Activated T-helper 2 cell treated with anti-CD3 and anti-CD28 coated beads, Interferon-gamma antibody, Interleukin-2, Interleukin-4, amounts not matched to agents 10 μg/mL and 5 μg/mL and 100 μg/mL, durations not matched to agents 14 hours and 24 hours and 36 hours (primary cell): ENCODE measurements at regions of chr11 and their contacts with region 1.

Region 1: DNA sequence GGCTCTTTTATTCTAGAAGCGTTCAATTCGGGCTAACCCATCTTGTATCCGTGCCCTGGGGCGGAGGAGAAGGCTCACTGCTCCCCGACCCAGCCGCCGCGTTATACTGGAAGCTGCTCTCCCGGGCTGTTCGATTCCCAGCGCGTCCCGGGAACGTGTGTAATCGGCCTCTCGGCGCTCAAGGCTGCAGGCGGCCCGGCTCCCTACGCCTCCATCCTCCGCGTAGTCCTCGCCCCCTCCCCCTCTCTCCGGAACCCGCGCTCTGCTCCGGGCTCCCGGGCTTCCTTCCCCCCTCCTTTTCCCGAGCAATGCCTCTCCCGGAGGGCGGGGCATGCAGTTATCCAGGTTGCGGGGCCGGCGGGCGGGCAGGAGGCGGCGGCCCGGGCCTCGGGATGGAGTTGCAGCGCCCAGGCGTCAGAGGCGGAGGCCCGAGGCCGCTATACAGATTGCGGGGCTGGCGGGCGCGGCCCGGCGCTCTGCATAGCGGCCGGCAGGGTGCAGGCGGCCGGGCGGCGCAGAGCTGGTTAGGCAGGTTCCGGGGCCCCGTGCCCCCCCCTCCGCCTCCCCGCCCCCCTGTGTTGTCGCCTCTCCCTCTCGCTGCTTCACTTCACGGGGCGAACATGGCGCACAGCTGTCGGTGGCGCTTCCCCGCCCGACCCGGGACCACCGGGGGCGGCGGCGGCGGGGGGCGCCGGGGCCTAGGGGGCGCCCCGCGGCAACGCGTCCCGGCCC is at the start of gene KMT2A:
- DNase-seq: peak; percentile 94
- H3K4me3 Mint-ChIP-seq: peak within 1 kb of the TSS; percentile 93
- H3K27ac Mint-ChIP-seq: peak within 1 kb of the TSS; percentile 89
- H3K4me1 Mint-ChIP-seq: peaks cover 39% of the 10 kb centered on the region
- H3K27me3 Mint-ChIP-seq: peaks cover 7% of the 10 kb centered on the region
- total RNA-seq, gene KMT2A: 61.6 and 64.2 TPM in 2 replicates

Region 2: DNA sequence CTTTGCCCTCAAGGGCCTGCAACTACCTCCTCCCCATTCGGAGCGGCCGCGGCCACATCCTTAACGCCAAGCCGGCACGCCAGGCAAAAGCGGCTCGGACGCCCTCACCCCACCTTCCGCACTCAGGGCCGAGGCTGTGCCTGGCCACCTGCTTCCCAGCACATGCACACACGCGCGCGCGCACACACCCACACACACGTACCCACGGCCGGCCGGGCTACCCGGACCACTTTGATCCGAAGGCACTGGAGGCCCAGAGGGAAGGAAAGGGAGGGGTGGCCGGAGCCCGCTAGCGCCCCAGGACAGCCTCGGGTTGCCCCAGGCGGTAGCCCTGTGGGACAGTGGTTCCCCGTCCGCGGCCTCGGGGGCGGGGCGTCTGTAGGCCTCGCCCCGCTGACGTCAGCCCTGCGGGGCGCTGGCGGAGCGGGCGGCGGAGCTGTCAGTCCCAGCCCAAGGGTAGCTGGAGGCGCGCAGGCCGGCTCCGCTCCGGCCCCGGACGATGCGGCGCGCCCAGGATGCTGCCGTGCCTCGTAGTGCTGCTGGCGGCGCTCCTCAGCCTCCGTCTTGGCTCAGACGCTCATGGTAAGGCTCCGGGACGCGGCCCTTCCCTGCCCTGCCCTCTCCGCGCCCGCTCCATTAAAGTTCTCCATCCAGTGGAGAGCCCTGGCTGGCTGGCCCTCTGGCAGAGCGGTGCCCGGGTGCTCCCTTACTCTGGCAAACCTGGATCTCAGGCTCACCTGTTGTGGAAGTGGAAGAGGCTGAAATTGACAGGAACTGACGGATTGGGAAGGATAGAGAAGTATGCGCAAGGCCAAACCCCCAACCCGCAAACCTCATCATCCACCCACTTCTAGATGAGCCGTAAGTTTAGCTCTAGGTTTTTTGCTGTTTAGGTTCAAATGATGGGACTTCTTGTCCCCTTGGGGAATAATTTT is 449.8 kb before region 1 on chr11 and contains the start of gene IL10RA:
- intact Hi-C with region 1: loop called (anchors 2 kb)
- DNase-seq: peak; percentile 85
- H3K4me3 Mint-ChIP-seq: peak within 1 kb of the TSS; percentile 87
- H3K27ac Mint-ChIP-seq: peak within 1 kb of the TSS; percentile 90
- H3K4me1 Mint-ChIP-seq: peaks cover 58% of the 10 kb centered on the region
- H3K27me3 Mint-ChIP-seq: no peaks in the 10 kb centered on the region
- total RNA-seq, gene IL10RA: 144 and 147 TPM in 2 replicates

Region 3: GRCh38 chr11:118401151-118401878 is 34.7 kb before region 1 on chr11 and contains the start of gene ATP5MG:
- intact Hi-C with region 1: loop called (anchors 1 kb)
- DNase-seq: peak; percentile 88
- H3K4me3 Mint-ChIP-seq: peak within 1 kb of the TSS; percentile 99
- H3K27ac Mint-ChIP-seq: peak within 1 kb of the TSS; percentile 99
- H3K4me1 Mint-ChIP-seq: peaks cover 60% of the 10 kb centered on the region
- H3K27me3 Mint-ChIP-seq: no peaks in the 10 kb centered on the region
- total RNA-seq, gene ATP5MG: 237 and 266 TPM in 2 replicates

Region 4: DNA sequence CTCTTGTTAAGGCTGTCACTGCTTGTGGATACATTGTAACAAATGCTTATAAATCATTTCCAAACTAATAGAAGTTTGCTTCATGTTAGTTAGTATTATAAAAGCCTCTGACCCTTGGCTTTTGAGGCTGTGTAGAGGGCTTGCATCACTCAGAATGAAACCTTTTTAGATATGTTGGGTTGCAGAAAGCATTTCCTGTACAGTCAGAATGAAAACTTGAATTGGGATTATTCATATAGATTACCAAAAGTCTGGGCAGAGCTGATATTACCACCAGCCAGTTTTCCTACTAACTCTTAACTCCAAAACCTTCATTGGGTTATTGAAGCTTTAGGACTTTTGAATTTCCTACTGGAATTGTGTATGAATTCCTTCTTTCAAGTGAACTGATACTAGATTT is 12.2 kb after region 1 on chr11:
- intact Hi-C with region 1: loop called (anchors 1 kb)
- DNase-seq: no peak
- H3K4me3 Mint-ChIP-seq: no peak overlapping the region
- H3K27ac Mint-ChIP-seq: peak overlapping the region; percentile 9
- H3K4me1 Mint-ChIP-seq: peaks cover 56% of the 10 kb centered on the region
- H3K27me3 Mint-ChIP-seq: no peaks in the 10 kb centered on the region

Region 5: GRCh38 chr11:118572061-118572980 is 136.3 kb after region 1 on chr11 and contains the start of gene ARCN1:
- intact Hi-C with region 1: loop called (anchors 5 kb)
- DNase-seq: peak; percentile 72
- H3K4me3 Mint-ChIP-seq: peak within 1 kb of the TSS; percentile 99
- H3K27ac Mint-ChIP-seq: peak within 1 kb of the TSS; percentile 97
- H3K4me1 Mint-ChIP-seq: peaks cover 29% of the 10 kb centered on the region
- H3K27me3 Mint-ChIP-seq: no peaks in the 10 kb centered on the region
- total RNA-seq, gene ARCN1: 132 and 133 TPM in 2 replicates

Region 6: DNA sequence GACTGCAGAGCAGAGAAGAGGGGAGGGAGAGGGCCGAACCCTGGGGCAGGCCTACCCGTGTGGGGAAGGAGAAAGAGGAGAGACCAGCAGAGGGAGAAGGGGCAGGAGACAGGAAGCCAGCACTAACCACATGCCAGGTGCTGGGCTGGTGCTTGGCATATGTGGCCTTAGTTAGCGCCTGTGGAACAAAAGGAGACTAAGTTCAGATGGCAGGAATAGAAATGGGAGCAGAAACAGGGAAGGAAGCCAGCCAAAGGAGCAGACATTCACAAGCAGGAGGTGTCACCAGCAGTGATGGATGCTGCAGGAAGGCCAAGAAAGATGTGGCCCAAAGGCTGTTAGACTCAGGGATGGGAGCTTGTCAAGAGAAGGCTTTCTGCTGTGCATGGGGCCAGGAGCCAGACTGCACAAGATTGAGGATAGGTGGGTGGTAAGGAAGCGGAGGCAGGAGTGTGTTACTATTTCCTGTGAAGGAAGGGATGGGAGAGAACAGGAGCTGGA is 216.7 kb after region 1 on chr11:
- intact Hi-C with region 1: no loop called
- DNase-seq: no peak
- H3K4me3 Mint-ChIP-seq: no peak overlapping the region
- H3K27ac Mint-ChIP-seq: no peak overlapping the region
- H3K4me1 Mint-ChIP-seq: peaks cover 4% of the 10 kb centered on the region
- H3K27me3 Mint-ChIP-seq: peaks cover 2% of the 10 kb centered on the region